CD4-positive, alpha-beta T cell (primary cell): ENCODE measurements at regions of chr2 and their contacts with region 1.

Region 1: DNA sequence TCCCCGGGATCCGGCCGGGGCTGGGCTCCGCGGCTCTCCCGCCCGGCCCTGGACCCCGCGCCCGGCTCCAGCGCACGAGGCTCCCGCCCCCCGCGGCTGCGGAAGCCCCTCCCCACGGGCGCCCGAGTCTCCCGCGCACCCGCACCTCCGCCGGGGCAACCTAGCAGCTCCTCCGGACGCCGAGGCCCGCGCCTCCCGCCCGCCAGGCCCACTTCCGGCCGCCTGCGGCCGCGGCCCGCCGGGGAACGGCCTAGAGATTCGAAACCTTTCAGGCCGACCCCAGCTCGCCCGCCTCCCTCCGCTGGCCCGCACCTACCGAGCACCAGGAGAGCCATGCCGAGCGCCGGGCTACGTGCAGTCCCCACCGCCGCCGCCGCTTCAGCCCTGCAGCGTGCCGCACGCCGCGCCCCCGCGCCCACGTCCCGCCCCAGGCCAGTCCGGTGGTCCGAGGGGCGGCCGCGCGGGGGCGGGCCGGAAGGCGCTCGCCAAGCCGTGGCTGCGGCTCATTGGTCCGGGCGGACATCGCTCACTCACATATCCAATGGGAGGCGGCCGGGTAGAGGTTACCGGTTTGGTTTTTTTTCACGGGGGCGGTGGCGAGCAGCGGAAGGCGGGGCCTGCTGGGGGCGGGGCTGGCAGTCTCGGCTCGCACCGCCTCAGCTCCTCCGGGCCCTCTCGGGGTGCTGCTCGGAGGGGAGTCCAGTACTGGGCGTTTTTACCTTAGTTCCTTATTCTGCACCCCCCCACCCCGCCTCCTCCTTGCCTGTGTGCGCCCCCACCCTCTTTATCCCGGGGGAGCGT is at the start of gene PDIA6:
- DNase-seq: peak; percentile 89 to 96 (median 92)
- ATAC-seq: peak; percentile 90
- H3K4me3 ChIP-seq: peak within 1 kb of the TSS; percentile 70
- H3K4me3 Mint-ChIP-seq: peak within 1 kb of the TSS; percentile 93
- H3K27ac ChIP-seq: peak within 1 kb of the TSS in 1 of 2 donors; percentile 31
- H3K27ac Mint-ChIP-seq: peak within 1 kb of the TSS; percentile 90
- H3K4me1 ChIP-seq: peaks cover 32% of the 10 kb centered on the region
- H3K4me1 Mint-ChIP-seq: peaks cover 34% of the 10 kb centered on the region
- H3K27me3 ChIP-seq: no peaks in the 10 kb centered on the region
- H3K27me3 Mint-ChIP-seq: peaks cover 2% of the 10 kb centered on the region
- CTCF ChIP-seq: no peak
- total RNA-seq, gene PDIA6: 25.5 to 26.3 TPM

Region 2: DNA sequence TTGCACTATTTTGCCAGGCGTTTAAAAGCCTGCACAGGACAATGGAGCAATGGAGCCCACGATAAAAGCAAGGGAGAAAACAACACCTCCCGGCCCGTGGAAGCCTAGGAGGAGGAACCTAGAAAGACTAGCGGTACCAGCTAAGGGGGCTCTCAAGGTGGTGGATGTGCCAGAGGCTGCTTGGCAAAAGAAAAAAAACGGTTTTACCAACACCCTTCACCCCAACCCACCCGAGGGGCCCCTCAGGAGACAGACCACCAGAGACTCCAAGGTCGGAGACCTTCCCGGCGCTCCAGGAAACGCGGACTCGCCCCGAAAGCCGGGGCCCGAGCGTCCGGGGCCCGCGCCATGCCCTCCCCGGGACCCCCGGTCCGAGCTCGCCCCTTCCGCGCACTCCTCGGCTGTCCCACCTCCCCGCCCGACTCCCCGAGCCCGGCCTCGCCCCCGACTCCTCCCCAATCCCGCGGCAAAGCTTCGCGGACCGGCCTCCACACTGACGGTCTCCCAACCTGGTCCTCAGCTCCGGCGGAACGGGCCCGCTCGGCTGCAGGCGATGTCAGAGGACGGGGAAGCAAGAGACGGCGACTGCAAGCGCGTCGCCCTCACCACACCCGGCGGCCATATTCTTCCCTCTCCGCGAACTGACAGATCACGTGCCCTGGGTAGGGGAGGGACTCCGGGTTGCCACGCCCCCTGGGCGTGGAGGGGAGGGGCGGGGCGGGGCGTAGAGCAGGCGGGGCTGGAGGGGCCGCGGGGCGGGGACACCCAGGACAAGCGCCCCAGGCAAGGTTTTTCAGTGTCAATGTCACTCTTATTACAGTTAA is 1975.4 kb before region 1 on chr2 and contains the start of gene KIDINS220:
- CTCF ChIA-PET with region 1: no interaction called
- POLR2A ChIA-PET with region 1: no interaction called
- intact Hi-C with region 1: loop called in 1 of 2 experiments (anchors 5 kb)
- DNase-seq: peak; percentile 79 to 93 (median 84)
- ATAC-seq: peak; percentile 96
- H3K4me3 ChIP-seq: peak within 1 kb of the TSS; percentile 89
- H3K4me3 Mint-ChIP-seq: peak within 1 kb of the TSS; percentile 100
- H3K27ac ChIP-seq: peak within 1 kb of the TSS in 1 of 2 donors; percentile 48
- H3K27ac Mint-ChIP-seq: peak within 1 kb of the TSS; percentile 84
- H3K4me1 ChIP-seq: peaks cover 40% of the 10 kb centered on the region
- H3K4me1 Mint-ChIP-seq: peaks cover 49% of the 10 kb centered on the region
- H3K27me3 ChIP-seq: no peaks in the 10 kb centered on the region
- H3K27me3 Mint-ChIP-seq: no peaks in the 10 kb centered on the region
- CTCF ChIP-seq: no peak
- total RNA-seq, gene KIDINS220: 29.3 to 31.4 TPM

Region 3: DNA sequence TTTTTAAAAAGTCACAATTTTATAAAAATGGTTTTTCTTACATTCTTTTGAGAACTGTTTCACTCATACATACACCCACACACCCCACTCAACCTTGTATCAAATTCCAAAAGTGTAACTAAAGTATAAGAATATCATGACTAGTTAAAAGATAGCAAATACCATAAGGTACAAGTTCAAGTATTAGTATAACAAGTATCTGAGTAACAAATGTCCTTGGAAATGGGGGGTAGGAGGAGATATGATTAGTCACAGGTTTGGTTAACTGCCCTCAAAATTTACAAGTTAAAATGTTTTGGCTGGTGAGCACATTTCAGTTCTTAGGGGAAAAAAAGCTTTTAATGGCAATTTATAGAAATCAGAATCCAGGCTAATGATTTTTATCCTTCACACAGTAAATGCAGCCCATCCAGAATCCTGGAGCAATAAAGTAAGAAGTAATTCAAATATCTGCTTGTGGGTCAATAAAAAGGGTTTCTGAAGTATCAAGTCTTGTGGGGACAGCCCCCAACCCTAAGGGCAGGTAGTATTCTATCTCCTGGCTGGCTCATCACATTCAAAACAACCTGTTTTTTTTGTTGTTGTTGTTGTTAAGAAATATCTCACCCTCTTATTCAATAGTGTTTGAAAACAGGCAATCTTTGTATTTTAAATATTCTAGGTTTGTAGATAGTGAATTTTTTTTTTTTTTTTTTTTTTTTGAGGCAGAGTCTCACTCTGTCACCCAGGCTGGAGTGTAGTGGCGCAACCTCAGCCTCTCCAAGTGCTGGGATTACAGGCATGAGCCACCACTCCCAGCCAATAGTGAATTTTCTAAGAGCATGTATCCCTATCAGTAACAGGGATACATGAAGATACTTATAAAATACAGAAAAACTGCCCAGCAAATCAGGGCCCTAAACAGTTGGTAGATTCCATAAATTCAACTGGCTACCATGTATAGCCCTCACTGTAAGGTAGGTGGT is 1323.7 kb before region 1 on chr2:
- CTCF ChIA-PET with region 1: no interaction called
- POLR2A ChIA-PET with region 1: no interaction called
- intact Hi-C with region 1: loop called in 1 of 2 experiments (anchors 5 kb)
- DNase-seq: no peak
- ATAC-seq: no peak
- H3K4me3 ChIP-seq: no peak overlapping the region
- H3K4me3 Mint-ChIP-seq: no peak overlapping the region
- H3K27ac ChIP-seq: no peak overlapping the region
- H3K27ac Mint-ChIP-seq: peak overlapping the region; percentile 44
- H3K4me1 ChIP-seq: no peaks in the 10 kb centered on the region
- H3K4me1 Mint-ChIP-seq: no peaks in the 10 kb centered on the region
- H3K27me3 ChIP-seq: no peaks in the 10 kb centered on the region
- H3K27me3 Mint-ChIP-seq: no peaks in the 10 kb centered on the region
- CTCF ChIP-seq: no peak

Region 4: DNA sequence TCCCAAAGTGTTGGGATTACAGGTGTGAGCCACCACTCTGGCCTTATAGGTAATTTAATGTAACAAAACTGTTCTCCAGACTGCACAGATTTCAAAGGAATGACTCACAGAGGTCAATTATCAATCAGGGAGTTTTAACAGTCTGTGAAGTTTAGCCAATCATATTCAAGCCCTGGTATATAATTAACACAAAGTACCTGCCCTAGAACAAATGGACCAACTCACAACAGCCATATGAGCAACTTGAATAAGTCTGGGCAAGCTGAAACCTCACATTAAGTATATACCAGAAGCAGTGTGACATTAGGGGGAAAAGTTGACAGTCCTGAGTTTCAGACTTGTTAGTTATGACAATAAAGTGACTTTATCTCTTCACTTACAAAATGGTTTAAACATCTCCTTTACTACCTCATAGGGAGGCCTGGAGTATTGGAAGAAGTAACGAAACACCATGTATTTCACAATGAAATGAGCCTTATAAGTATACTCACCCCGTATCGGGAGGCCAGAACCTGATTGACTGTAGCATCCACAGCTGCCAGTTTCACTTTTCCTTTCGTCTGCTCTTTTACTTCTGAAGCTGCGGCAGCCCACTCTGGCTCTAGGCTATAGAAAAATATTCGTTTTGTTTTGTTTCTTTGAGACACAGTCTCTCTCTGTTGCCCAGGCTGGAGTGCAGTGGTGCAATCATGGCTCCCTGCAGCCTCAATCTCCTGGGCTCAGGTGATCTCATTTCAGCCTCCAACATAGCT is 22.2 kb before region 1 on chr2:
- CTCF ChIA-PET with region 1: interaction called, 5 read pairs
- POLR2A ChIA-PET with region 1: interaction called, 16 read pairs
- intact Hi-C with region 1: loop called in 1 of 2 experiments (anchors 1 kb)
- DNase-seq: peak in 3 of 14 experiments; percentile 48 to 74 (median 48)
- ATAC-seq: peak; percentile 80
- H3K4me3 ChIP-seq: peak overlapping the region; percentile 28
- H3K4me3 Mint-ChIP-seq: peak overlapping the region; percentile 80
- H3K27ac ChIP-seq: peak overlapping the region in 1 of 2 donors; percentile 45
- H3K27ac Mint-ChIP-seq: peak overlapping the region; percentile 82
- H3K4me1 ChIP-seq: peaks cover 12% of the 10 kb centered on the region
- H3K4me1 Mint-ChIP-seq: peaks cover 26% of the 10 kb centered on the region
- H3K27me3 ChIP-seq: no peaks in the 10 kb centered on the region
- H3K27me3 Mint-ChIP-seq: no peaks in the 10 kb centered on the region
- CTCF ChIP-seq: no peak

Region 5: GRCh38 chr2:11154923-11155380 is 342.4 kb after region 1 on chr2:
- CTCF ChIA-PET with region 1: no interaction called
- POLR2A ChIA-PET with region 1: interaction called, 11 read pairs
- intact Hi-C with region 1: no loop called
- DNase-seq: peak; percentile 97 to 99 (median 99)
- ATAC-seq: peak; percentile 89
- H3K4me3 ChIP-seq: peak overlapping the region; percentile 60
- H3K4me3 Mint-ChIP-seq: peak overlapping the region; percentile 92
- H3K27ac ChIP-seq: peak overlapping the region; percentile 74 to 78
- H3K27ac Mint-ChIP-seq: peak overlapping the region; percentile 90
- H3K4me1 ChIP-seq: peaks cover 34% of the 10 kb centered on the region
- H3K4me1 Mint-ChIP-seq: peaks cover 24% of the 10 kb centered on the region
- H3K27me3 ChIP-seq: no peaks in the 10 kb centered on the region
- H3K27me3 Mint-ChIP-seq: no peaks in the 10 kb centered on the region
- CTCF ChIP-seq: no peak

Region 6: DNA sequence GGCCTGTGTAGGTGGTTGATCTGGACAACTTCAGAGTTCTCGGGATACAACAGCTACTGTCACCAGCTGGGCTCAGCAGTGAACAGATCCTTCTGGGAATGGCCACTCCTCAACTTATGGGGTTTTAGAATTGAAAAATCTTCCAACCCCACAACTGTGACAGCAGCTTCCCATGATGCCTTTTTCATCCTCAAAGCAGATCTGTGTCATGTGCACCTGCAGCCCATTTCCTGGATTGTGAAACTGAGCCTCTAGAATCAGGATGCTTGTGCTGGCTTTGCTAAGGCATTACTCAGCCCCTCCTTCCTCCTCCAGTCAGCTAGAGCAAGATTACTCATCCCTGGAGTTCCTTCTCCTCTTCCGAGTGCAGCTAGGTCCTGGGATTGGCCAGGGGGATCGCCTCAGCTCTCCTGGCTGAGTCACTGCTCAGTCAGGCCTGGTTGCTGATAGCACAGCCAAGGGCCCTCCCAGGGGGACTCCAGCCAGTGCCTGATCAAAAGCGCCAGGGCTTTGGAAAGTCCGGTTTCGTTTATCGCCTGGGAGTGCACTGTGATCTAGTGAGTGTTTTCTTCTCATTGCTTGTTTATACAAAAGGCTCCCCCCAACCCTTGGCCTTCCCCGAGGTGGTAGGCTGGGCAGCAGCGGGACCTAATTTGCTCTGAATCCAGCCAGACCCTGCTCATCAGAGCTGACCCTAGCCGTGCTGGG is 931.4 kb after region 1 on chr2:
- CTCF ChIA-PET with region 1: no interaction called
- POLR2A ChIA-PET with region 1: no interaction called
- intact Hi-C with region 1: loop called in 1 of 2 experiments (anchors 5 kb)
- DNase-seq: peak; percentile 43 to 91 (median 62)
- ATAC-seq: peak; percentile 30
- H3K4me3 ChIP-seq: peak overlapping the region; percentile 34
- H3K4me3 Mint-ChIP-seq: peak overlapping the region; percentile 78
- H3K27ac ChIP-seq: peak overlapping the region in 1 of 2 donors; percentile 61
- H3K27ac Mint-ChIP-seq: peak overlapping the region; percentile 76
- H3K4me1 ChIP-seq: peaks cover 52% of the 10 kb centered on the region
- H3K4me1 Mint-ChIP-seq: peaks cover 54% of the 10 kb centered on the region
- H3K27me3 ChIP-seq: no peaks in the 10 kb centered on the region
- H3K27me3 Mint-ChIP-seq: no peaks in the 10 kb centered on the region
- CTCF ChIP-seq: no peak